T-cell (primary cell): ENCODE measurements at regions of chr9 and their contacts with region 1.

Region 1: DNA sequence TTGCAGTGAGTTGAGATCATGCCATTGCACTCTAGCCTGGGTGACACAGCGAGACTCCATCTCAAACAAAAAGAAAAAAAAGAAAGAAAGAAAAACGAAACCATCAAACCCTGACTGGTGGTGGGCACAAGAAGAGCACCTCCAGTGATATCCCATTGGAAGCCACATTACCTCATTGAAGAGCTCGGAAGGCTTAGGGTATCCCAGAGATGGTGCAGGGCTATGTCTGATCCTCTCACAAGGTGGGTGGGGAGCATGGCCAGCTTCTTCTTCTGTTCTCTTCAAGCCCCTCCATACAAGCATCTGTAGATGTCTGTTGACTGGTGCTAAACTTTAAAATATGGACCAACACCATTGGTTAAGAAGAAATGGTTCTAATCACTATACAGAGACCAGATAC is 45.8 kb downstream of the GAS1 start:
- DNase-seq: no peak
- ATAC-seq: no peak
- H3K4me3 ChIP-seq: no peak overlapping the region
- H3K4me3 Mint-ChIP-seq: no peak overlapping the region
- H3K27ac ChIP-seq: no peak overlapping the region
- H3K27ac Mint-ChIP-seq: no peak overlapping the region
- H3K4me1 ChIP-seq: peaks cover 0 to 3% of the 10 kb centered on the region in 2 experiments
- H3K4me1 Mint-ChIP-seq: peaks cover 6 to 13% (median 11%) of the 10 kb centered on the region in 3 donors
- H3K27me3 ChIP-seq: peaks cover 5 to 32% of the 10 kb centered on the region in 2 experiments
- H3K27me3 Mint-ChIP-seq: peaks cover 54 to 57% of the 10 kb centered on the region in 2 donors

Region 2: DNA sequence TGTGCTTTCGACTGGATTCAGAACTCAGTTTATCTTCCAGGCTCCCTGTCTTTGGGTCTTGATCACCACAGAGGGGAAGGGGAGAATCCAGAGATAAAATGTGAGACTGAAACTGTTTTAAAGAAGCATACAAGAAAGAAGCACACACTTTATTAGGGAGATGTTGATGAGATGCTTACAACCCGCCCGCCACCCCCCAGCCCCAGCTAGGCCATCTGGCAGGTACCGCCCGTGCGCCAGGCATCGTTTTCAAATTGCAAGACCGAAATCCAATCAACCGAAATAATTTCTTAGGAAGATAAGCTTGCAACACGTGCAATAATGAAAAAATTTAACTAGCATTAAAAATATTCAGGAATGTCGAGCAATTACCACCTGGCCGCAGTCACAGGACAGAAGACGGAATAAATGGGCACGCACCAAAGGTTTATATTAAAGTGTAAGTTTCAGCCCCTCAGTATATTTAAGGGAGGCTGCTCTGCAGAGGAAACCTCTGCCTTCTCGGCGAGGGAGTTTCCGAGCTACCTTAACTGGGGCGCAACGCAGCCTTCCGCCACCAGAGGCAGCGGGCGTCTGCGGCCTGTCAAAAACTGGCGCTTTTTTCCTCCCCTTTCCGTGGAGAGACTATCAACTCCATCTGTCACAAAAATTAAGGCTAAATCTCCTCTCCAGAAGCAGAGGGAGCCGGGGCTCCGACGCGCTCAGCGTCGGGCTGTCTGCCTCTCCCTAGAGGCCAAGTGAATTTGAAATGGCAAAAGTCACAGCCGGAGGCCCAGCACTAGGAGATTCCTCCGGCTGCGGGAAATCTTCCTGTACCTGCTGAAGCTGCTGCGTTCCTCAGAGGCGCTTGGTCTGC is 46.8 kb after region 1 on chr9:
- CTCF ChIA-PET with region 1: no interaction called
- POLR2A ChIA-PET with region 1: no interaction called
- DNase-seq: peak; percentile 36 to 82 (median 63)
- ATAC-seq: peak; percentile 58 to 73 (median 64)
- H3K4me3 ChIP-seq: peak overlapping the region; percentile 82 to 92
- H3K4me3 Mint-ChIP-seq: peak overlapping the region; percentile 82 to 87 (median 83)
- H3K27ac ChIP-seq: peak overlapping the region; percentile 5
- H3K27ac Mint-ChIP-seq: peak overlapping the region; percentile 39 to 63
- H3K4me1 ChIP-seq: peaks cover 6 to 21% of the 10 kb centered on the region in 2 experiments
- H3K4me1 Mint-ChIP-seq: peaks cover 16 to 26% (median 24%) of the 10 kb centered on the region in 3 donors
- H3K27me3 ChIP-seq: peaks cover 7 to 12% of the 10 kb centered on the region in 2 experiments
- H3K27me3 Mint-ChIP-seq: peaks cover 20 to 29% of the 10 kb centered on the region in 2 donors

Region 3: DNA sequence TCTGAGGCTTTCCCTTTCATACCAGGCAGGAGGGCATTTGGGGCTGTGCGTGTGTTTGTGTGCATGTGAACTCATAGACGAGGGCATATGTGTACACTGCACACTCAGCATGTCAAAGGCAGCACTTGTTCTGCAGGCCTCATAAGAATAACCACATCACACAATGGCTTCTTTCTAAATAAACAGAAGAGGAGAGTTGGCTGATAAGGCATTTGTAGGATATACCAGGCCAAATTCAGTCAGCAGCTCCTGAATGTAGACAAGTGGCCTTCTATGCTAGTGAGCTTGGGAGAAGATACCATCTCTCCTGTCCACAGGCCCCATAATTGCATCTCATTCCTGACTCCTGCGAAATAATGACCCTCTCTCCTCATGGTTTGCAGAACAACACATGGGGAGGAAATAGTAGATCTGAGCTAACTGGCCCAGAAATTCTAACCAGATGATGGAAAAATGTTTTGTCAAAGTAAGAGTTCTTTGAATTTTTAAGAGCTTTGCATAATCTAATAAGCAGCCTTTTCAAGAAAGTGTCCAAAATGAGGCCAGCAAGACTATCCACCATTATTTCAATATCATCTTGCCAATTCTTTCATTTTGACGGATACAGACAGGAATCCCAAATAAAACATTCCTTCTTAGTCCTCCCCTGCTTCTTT is 106.3 kb after region 1 on chr9:
- CTCF ChIA-PET with region 1: no interaction called
- POLR2A ChIA-PET with region 1: no interaction called
- DNase-seq: no peak
- ATAC-seq: no peak
- H3K4me3 ChIP-seq: no peak overlapping the region
- H3K4me3 Mint-ChIP-seq: no peak overlapping the region
- H3K27ac ChIP-seq: no peak overlapping the region
- H3K27ac Mint-ChIP-seq: no peak overlapping the region
- H3K4me1 ChIP-seq: no peaks in the 10 kb centered on the region
- H3K4me1 Mint-ChIP-seq: no peaks in the 10 kb centered on the region
- H3K27me3 ChIP-seq: peaks cover 0 to 8% of the 10 kb centered on the region in 2 experiments
- H3K27me3 Mint-ChIP-seq: peaks cover 8 to 19% of the 10 kb centered on the region in 2 donors

Region 4: DNA sequence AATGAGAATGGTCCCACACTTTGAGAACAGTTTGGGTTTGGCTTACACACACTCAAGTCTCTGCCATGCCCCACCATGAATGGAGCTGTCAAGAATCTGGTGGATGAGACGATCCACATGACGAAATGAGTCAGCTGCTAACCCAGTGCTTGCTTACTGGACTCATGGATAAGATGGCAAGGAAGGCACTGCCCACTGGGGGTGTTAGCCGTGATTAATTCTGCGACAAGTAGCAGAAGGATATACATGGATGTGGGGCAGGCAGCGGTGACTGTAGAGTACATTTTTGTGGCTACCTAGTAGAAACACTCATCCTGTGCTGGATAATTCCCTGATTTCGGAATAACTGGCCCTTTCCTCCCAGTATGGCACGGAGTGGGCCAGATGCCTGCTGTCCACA is 1159.2 kb after region 1 on chr9:
- CTCF ChIA-PET with region 1: no interaction called
- POLR2A ChIA-PET with region 1: interaction called in 1 of 2 experiments, 11 read pairs
- DNase-seq: no peak
- ATAC-seq: no peak
- H3K4me3 ChIP-seq: no peak overlapping the region
- H3K4me3 Mint-ChIP-seq: no peak overlapping the region
- H3K27ac ChIP-seq: no peak overlapping the region
- H3K27ac Mint-ChIP-seq: no peak overlapping the region
- H3K4me1 ChIP-seq: no peaks in the 10 kb centered on the region
- H3K4me1 Mint-ChIP-seq: no peaks in the 10 kb centered on the region
- H3K27me3 ChIP-seq: peaks cover 0 to 8% of the 10 kb centered on the region in 2 experiments
- H3K27me3 Mint-ChIP-seq: peaks cover 3 to 5% of the 10 kb centered on the region in 2 donors